Activated naive CD4-positive, alpha-beta T cell treated with anti-CD3 and anti-CD28 coated beads, Interleukin-2, amount 10 ng/mL, durations not matched to agents 7 days and 5 days (primary cell): ENCODE measurements at regions of chr15 and their contacts with region 1.

Region 1: GRCh38 chr15:79872358-79873017 is 24.3 kb downstream of the MTHFS start:
- DNase-seq: peak; percentile 61
- H3K4me3 Mint-ChIP-seq: no peak overlapping the region
- H3K27ac Mint-ChIP-seq: peak overlapping the region; percentile 74
- H3K4me1 Mint-ChIP-seq: peaks cover 22% of the 10 kb centered on the region
- H3K27me3 Mint-ChIP-seq: no peaks in the 10 kb centered on the region

Region 2: DNA sequence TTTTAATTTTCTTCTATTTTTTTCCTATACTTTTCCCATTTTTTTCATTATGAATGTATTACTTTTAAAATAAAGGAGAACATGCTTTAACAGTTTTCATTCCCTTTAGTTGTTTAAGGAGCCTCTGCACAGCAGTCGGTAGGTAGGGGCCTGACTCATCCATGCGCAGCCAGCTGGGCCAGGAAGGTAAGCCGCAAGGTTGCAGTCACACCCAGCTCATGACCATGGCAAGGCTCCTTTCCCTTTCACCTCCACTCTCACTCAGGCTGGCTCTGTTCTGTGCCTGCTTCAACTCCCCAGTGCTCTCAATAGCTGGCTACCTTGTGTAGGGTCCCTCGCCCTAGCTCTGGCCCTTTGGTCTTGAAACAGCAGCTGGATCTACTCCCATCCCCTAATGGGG is 607.3 kb before region 1 on chr15:
- CTCF ChIA-PET with region 1: no interaction called
- DNase-seq: no peak
- H3K4me3 Mint-ChIP-seq: no peak overlapping the region
- H3K27ac Mint-ChIP-seq: no peak overlapping the region
- H3K4me1 Mint-ChIP-seq: no peaks in the 10 kb centered on the region
- H3K27me3 Mint-ChIP-seq: peaks cover 21% of the 10 kb centered on the region

Region 3: GRCh38 chr15:79853458-79854328 is 18.8 kb before region 1 on chr15:
- CTCF ChIA-PET with region 1: interaction called, 12 read pairs
- DNase-seq: peak; percentile 70
- H3K4me3 Mint-ChIP-seq: no peak overlapping the region
- H3K27ac Mint-ChIP-seq: no peak overlapping the region
- H3K4me1 Mint-ChIP-seq: peaks cover 12% of the 10 kb centered on the region
- H3K27me3 Mint-ChIP-seq: no peaks in the 10 kb centered on the region